MCF 10A (cell line): ENCODE measurements at regions of chr1 and their contacts with region 1.

Region 1: DNA sequence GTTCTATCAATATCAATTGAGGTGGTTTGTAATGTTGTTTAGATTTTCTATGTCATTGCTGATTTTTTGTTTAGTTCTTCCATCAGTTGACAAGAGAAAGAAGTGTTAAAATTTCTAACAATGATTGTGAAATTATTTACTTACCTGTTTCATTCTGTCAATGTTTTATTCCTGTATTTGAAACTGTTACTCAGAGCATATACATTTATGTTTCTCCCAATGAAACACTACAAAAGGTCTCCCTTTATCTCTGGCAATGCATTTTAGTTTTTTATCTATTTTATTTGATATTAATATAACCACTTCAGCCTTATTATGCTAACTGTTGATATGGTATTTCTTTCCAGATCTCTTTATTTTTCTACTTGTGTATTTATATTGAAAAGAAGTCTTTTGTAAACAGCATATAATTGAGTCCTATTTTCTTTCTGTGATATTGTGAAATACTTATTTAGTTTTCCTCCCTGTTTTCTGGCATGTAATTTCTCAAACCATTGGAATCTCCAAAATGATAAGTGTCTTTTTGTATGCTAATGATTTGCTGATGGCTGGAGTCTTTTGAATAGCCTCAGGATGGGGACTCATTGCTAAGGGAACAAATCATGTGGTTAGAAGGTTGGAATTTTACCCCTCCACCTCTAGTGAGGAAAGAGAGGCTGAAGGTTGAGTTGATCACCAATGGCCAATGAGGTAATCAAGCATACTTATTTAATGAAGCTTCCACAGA is 122.0 kb downstream of the ADSS2 start:
- DNase-seq: peak; percentile 48
- H3K4me3 Mint-ChIP-seq: no peak overlapping the region
- H3K27ac Mint-ChIP-seq: peak overlapping the region; percentile 47
- H3K4me1 Mint-ChIP-seq: peaks cover 38% of the 10 kb centered on the region
- H3K27me3 Mint-ChIP-seq: no peaks in the 10 kb centered on the region
- CTCF ChIP-seq: no peak

Region 2: GRCh38 chr1:243968413-243968812 is 361.3 kb before region 1 on chr1:
- CTCF ChIA-PET with region 1: no interaction called
- POLR2A ChIA-PET with region 1: no interaction called
- intact Hi-C with region 1: no loop called
- DNase-seq: no peak
- H3K4me3 Mint-ChIP-seq: no peak overlapping the region
- H3K27ac Mint-ChIP-seq: no peak overlapping the region
- H3K4me1 Mint-ChIP-seq: no peaks in the 10 kb centered on the region
- H3K27me3 Mint-ChIP-seq: peaks cover 31% of the 10 kb centered on the region
- CTCF ChIP-seq: no peak

Region 3: DNA sequence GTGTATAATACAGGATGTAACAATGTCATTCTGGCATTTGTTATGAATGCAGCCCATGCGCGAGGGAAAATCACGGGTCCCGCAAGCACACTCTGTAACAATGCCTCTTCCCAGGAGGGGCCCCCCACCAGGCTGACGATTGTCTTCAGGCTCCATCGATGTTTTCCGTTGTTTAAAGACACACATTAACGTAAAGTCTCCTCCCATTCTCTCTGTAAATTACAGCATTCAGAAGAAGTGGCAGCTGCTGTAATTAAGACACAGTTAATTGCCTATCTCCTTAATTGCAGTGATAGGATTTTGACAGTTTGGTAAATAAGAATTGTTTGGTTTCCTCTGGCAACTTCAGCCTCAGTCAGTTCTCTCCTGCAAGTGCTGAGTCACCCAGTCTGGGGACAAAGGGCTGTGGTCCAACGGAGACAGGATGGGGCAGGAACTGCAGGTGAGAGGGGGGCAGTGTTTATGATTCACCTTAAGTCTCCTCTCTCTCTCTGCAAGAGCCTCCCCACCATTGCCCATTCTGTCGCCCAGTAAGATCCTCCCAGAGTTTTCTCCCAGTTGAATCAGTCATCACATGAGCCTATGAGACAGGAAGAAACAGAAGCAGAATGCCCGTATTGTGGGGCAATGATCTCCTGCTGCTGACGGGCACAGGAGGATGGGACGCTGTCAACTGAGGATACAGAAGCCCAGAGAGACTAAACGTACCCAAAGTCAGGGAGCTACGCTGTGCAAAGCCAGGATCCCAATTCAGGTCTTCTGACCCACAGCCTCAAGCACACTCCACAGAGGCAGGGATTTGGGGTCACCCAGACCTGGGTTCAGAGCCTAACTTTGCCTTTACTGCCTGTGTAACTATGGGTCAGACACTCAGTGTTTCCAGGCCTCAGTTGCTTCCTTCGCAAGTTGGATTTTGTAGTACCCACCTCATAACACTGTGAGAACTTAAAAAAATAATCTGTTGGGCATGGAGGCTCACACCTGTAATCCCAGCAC is 12.0 kb after region 1 on chr1:
- CTCF ChIA-PET with region 1: interaction called, 6 read pairs
- POLR2A ChIA-PET with region 1: interaction called, 20 read pairs
- intact Hi-C with region 1: no loop called
- DNase-seq: peak; percentile 94
- H3K4me3 Mint-ChIP-seq: peak overlapping the region; percentile 12
- H3K27ac Mint-ChIP-seq: peak overlapping the region; percentile 76
- H3K4me1 Mint-ChIP-seq: peaks cover 9% of the 10 kb centered on the region
- H3K27me3 Mint-ChIP-seq: no peaks in the 10 kb centered on the region
- CTCF ChIP-seq: no peak